Mammary epithelial cell (primary cell): ENCODE measurements at regions of chr6 and their contacts with region 1.

Region 1: GRCh38 chr6:113879186-113880096 is 22.3 kb downstream of the MARCKS start:
- DNase-seq: peak; percentile 64
- H3K4me3 ChIP-seq: no peak overlapping the region
- H3K27ac ChIP-seq: no peak overlapping the region
- H3K4me1 ChIP-seq: peaks cover 6% of the 10 kb centered on the region
- H3K27me3 ChIP-seq: no peaks in the 10 kb centered on the region
- CTCF ChIP-seq: peak; percentile 71 to 87

Region 2: GRCh38 chr6:112773187-112773586 is 1106.3 kb before region 1 on chr6:
- CTCF ChIA-PET with region 1: no interaction called
- dilution Hi-C with region 1: no loop called
- in situ Hi-C with region 1: loop called (anchors 10 to 25 kb)
- intact Hi-C with region 1: no loop called
- DNase-seq: no peak
- H3K4me3 ChIP-seq: no peak overlapping the region
- H3K27ac ChIP-seq: no peak overlapping the region
- H3K4me1 ChIP-seq: no peaks in the 10 kb centered on the region
- H3K27me3 ChIP-seq: no peaks in the 10 kb centered on the region
- CTCF ChIP-seq: no peak

Region 3: DNA sequence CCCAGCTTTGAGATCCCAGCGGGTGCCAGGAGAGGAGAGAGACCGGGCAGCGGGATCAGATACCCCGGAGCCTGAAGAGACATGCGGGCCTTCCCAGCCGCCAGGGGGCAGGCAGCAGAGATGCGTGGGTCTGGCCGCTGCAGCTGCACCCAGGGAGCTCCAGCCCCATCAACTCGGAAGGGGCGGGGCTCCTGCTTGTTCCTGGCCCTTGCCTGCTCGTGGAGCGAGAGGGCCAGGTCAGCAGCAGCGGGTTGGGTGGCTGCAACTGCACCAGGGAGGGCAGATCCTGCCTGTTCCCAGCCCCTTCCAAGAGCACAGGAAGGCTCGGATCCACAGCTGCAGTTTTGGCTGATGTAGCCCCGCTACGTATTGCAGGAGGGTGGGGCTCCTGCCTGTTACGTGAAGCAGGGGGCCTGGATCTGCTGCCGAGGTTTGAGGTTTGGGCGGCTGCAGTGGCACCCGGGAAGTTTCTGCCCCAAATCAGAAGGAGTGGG is 999.5 kb before region 1 on chr6:
- CTCF ChIA-PET with region 1: no interaction called
- dilution Hi-C with region 1: no loop called
- in situ Hi-C with region 1: no loop called
- intact Hi-C with region 1: loop called (anchors 1 kb)
- DNase-seq: no peak
- H3K4me3 ChIP-seq: no peak overlapping the region
- H3K27ac ChIP-seq: no peak overlapping the region
- H3K4me1 ChIP-seq: peaks cover 10% of the 10 kb centered on the region
- H3K27me3 ChIP-seq: no peaks in the 10 kb centered on the region
- CTCF ChIP-seq: no peak

Region 4: GRCh38 chr6:113290684-113291083 is 588.8 kb before region 1 on chr6:
- CTCF ChIA-PET with region 1: no interaction called
- dilution Hi-C with region 1: no loop called
- in situ Hi-C with region 1: no loop called
- intact Hi-C with region 1: loop called (anchors 1 kb)
- DNase-seq: no peak
- H3K4me3 ChIP-seq: no peak overlapping the region
- H3K27ac ChIP-seq: no peak overlapping the region
- H3K4me1 ChIP-seq: no peaks in the 10 kb centered on the region
- H3K27me3 ChIP-seq: no peaks in the 10 kb centered on the region
- CTCF ChIP-seq: no peak

Region 5: DNA sequence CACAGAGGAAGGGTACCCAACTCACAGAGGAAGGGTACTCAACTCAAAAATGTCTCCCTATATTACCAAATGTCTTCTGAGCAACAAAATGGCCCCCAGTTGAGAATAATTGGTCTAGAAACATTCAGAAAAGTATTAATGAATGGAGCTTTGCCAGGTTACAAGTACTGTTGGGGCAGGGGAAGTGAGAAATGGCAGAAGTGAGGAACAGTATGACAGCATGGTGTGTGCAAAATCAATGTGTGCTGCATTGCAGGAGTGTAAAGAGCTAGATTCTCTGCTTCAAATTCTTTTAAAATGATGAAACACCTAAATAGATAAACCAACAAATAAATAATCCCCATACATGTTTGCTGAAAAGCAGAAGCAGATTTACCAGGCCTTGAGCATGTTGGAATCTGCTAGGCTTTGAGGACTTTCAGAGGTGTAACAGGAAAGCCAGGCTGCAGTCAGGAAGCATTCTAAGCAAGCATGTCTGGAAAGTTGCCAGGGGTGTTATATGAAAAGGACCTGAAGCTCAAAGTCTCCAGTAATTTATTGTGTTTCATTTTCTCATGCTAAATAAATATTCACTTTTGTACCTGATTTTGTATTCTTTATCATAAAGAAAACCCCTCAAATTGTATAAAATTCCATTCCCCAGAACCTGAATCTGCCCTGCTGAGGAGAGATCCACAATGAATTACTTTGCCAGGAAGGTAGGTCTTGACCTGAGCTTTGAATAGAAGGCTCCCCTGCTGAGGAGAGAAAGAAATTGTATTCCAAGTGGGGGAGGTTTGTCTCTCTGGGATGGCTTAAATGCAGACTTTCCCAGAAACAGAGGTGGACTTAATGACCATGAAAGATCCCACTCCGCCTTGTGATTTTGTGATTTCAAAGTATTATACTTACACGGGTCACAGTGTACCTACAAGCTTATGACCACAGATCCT is 287.3 kb before region 1 on chr6:
- CTCF ChIA-PET with region 1: no interaction called
- dilution Hi-C with region 1: no loop called
- in situ Hi-C with region 1: no loop called
- intact Hi-C with region 1: loop called (anchors 1 kb)
- DNase-seq: no peak
- H3K4me3 ChIP-seq: no peak overlapping the region
- H3K27ac ChIP-seq: no peak overlapping the region
- H3K4me1 ChIP-seq: no peaks in the 10 kb centered on the region
- H3K27me3 ChIP-seq: no peaks in the 10 kb centered on the region
- CTCF ChIP-seq: no peak